Activated CD4-positive, alpha-beta memory T cell treated with anti-CD3 and anti-CD28 coated beads, Interleukin-2, amount 10 ng/mL, durations not matched to agents 7 days and 5 days (primary cell): ENCODE measurements at regions of chr11 and their contacts with region 1.

Region 1: DNA sequence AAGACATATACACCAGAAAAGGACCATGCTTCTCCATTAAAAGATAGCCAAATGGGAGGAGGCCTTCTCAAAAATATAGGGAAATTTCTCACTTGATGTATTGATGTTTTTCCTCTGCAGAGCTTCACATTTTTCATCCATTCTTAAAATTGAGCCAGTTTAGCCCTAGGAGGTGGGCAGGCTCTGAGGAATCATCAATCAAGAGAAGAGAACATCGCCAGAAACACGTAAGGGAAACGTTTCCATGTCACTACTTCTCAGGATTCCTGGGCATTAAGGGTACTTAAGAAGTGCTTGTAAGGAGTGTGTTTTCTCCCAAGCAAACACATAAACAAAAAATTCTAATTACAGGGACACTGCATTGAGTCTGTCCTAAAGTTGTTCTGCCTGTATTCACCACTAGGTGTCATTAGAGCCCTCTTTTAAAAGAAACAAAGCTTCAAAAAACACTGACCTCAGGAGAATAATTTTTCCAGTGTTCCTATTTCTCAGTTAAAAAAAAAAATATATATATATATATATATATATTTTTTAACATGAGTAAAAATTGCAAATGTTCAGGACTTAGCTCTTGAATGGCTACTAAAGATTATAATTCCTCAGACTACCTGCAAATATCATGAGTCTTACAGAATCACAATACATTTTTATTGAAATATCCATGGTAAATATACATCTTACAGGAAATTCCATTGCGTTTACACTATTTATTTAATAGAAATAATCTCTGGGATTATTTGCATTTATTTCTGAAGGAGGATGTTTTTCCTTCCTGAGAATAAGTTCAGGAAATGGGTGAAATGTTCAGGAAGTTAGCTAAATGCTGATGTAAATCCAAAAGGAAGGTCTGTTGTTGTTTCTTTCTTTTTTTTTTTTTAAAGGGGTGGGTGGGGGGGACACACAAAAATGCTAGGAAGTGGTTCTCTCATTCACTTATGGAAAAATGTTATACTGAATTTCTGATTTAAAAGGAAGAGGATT is 16.0 kb downstream of the FZD4 start:
- DNase-seq: no peak
- H3K4me3 Mint-ChIP-seq: no peak overlapping the region
- H3K27ac Mint-ChIP-seq: no peak overlapping the region
- H3K4me1 Mint-ChIP-seq: no peaks in the 10 kb centered on the region
- H3K27me3 Mint-ChIP-seq: peaks cover 4% of the 10 kb centered on the region

Region 2: GRCh38 chr11:86896441-86896841 is 42.7 kb before region 1 on chr11:
- CTCF ChIA-PET with region 1: no interaction called
- POLR2A ChIA-PET with region 1: no interaction called
- DNase-seq: no peak
- H3K4me3 Mint-ChIP-seq: no peak overlapping the region
- H3K27ac Mint-ChIP-seq: no peak overlapping the region
- H3K4me1 Mint-ChIP-seq: no peaks in the 10 kb centered on the region
- H3K27me3 Mint-ChIP-seq: peaks cover 16% of the 10 kb centered on the region

Region 3: DNA sequence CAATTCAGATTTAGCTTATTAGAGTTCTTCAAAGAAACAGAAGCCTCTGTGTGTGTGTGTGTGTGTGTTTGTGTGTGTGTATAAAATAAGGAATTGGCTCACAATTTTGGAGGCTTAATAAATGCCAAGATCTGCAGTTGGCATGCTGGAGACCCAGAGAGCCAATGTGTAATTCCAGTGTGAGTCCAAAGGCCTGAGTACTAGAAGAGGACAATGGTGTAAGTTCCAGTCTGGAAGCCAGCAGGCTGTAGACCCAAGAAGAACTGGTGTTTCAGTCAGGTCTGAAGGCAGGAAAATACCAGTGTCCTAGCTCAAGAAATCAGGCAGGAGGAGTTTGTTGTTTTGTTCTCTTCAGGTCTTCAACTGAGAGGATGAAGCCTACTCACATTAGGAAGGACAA is 118.6 kb after region 1 on chr11:
- CTCF ChIA-PET with region 1: no interaction called
- POLR2A ChIA-PET with region 1: no interaction called
- DNase-seq: no peak
- H3K4me3 Mint-ChIP-seq: no peak overlapping the region
- H3K27ac Mint-ChIP-seq: no peak overlapping the region
- H3K4me1 Mint-ChIP-seq: peaks cover 3% of the 10 kb centered on the region
- H3K27me3 Mint-ChIP-seq: no peaks in the 10 kb centered on the region

Region 4: DNA sequence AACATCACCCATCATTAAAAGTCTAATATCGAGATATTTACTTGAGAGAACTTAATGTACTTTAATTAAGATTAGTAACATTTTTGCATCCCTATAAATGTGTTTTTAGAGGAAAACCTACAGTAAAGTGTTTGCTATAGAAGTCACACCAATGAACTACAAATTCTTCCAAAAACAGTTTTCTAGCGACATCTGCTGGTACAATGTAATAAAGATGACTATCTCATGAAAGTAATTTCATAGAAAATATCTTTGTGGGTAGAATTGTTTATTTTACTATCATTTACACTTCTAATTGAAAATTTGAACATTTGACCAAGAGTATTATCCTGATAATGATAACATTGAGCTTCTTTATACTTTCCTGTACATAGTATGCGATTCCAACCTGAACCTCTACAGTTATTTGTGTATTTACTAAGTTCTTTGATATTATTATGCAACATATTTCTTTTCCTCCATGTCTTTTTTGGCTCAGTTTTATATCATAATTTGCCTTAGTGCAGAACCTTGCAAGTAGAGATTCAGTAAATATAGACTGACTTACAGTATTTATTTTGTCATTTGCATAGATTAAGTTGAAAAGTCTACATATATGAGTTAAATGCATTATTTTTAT is 351.2 kb after region 1 on chr11:
- CTCF ChIA-PET with region 1: interaction called, 21 read pairs
- POLR2A ChIA-PET with region 1: no interaction called
- DNase-seq: no peak
- H3K4me3 Mint-ChIP-seq: no peak overlapping the region
- H3K27ac Mint-ChIP-seq: no peak overlapping the region
- H3K4me1 Mint-ChIP-seq: no peaks in the 10 kb centered on the region
- H3K27me3 Mint-ChIP-seq: no peaks in the 10 kb centered on the region

Region 5: GRCh38 chr11:87421422-87421821 is 482.2 kb after region 1 on chr11:
- CTCF ChIA-PET with region 1: interaction called, 16 read pairs
- POLR2A ChIA-PET with region 1: no interaction called
- DNase-seq: peak; percentile 17
- H3K4me3 Mint-ChIP-seq: no peak overlapping the region
- H3K27ac Mint-ChIP-seq: no peak overlapping the region
- H3K4me1 Mint-ChIP-seq: no peaks in the 10 kb centered on the region
- H3K27me3 Mint-ChIP-seq: peaks cover 4% of the 10 kb centered on the region